ENCODE measurements at regions of chrX and their contacts with region 1.

Region 1: GRCh38 chrX:2811271-2811670 is 17.5 kb upstream of the GYG2 start:
- DNase-seq: no peak
- ATAC-seq: no peak

Region 2: GRCh38 chrX:2640275-2641150 is 170.8 kb before region 1 on chrX:
- intact Hi-C with region 1: loop called in 1 of 2 experiments (anchors 5 kb)
- DNase-seq: no peak
- ATAC-seq: no peak